ENCODE measurements at regions of chr6 and their contacts with region 1.

Region 1: DNA sequence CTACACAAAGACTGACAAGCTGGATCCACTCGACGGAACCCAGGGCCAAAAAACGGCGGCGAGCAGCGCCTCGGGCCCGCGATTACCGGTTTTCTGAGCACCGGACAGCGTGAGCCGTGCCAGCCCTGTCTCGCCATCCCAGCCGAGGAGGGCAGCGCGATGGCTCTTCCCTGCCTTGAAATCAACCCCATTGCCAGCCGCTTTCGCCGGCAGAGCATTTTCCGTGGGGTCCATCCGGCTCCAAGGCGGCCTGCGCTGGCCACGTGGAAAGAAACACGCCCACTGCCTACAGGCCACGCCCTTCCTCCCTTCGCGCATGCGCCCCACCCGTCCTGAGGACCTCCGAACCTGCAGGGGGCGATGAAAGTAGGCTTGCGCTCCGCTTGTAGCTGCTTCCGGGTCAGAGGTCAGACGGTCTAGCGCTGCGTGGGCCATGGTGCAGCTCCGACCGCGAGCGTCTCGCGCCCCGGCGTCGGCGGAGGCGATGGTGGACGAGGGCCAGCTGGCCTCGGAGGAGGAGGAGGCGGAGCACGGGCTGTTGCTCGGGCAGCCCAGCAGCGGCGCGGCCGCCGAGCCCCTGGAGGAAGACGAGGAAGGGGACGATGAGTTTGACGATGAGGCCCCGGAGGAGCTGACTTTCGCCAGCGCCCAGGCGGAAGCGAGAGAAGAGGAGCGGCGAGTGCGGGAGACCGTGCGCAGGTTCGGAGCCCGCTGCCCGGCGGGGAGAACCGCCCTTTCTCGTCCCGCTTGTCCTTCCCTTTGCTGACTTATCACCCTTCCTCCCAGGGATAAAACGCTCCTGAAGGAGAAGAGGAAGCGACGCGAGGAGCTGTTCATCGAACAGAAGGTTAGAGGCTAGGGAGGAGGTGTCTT is at the start of gene NOL7:
- DNase-seq: peak; percentile 98
- H3K4me3 Mint-ChIP-seq: peak within 1 kb of the TSS; percentile 99
- H3K27ac Mint-ChIP-seq: peak within 1 kb of the TSS; percentile 93
- H3K4me1 Mint-ChIP-seq: peaks cover 66% of the 10 kb centered on the region
- H3K27me3 Mint-ChIP-seq: no peaks in the 10 kb centered on the region
- total RNA-seq, gene NOL7: 54.0 to 57.8 TPM

Region 2: DNA sequence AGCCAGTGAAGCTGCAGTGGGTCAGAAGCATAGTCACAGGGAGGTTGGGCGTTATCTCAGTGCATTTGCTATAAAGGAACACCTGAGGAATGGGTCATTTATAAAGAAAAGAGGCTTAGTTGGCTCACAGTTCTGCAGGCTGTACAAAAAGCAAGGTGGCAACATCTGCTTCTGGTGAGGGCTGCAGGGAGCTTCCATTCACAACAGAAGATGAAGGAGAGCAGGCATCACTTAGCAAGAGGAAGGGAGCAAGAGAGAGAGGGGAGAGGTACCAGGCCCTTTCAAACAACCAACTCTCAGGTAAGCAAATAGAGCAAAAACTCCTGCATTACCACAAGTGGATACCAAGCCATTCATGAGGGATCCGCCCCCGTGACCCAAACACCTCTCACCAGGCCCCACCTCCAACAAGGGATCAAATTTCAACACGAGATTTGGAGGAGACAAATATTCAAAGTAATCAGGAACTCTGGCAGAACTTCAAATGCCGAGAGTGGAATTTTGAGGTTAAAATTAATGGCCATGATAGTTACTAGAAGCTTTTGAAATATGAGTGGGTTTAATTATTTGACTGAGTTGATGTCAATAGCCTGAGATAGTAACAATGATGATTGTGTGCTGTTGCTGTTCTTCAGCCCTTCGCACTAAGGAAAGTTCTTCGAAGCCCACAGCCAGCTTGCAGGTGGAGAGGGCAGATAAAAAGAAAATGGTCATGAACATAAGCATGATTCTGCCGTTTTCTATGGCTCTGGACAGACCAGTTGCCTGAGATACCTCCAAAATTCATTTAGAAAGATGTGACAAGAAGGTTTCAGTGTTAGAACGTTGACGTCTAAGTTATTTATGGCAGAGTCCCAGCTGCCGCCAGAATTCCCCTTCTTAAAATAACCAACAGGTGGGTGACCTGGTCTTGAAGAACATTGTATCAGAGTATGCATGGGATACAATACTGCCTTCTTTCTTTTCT is 1781.3 kb before region 1 on chr6:
- CTCF ChIA-PET with region 1: no interaction called
- POLR2A ChIA-PET with region 1: no interaction called
- DNase-seq: no peak
- H3K4me3 Mint-ChIP-seq: no peak overlapping the region
- H3K27ac Mint-ChIP-seq: no peak overlapping the region
- H3K4me1 Mint-ChIP-seq: no peaks in the 10 kb centered on the region
- H3K27me3 Mint-ChIP-seq: no peaks in the 10 kb centered on the region

Region 3: GRCh38 chr6:13328076-13328874 is 286.9 kb before region 1 on chr6 and contains the start of gene TBC1D7:
- CTCF ChIA-PET with region 1: interaction called, 12 read pairs
- POLR2A ChIA-PET with region 1: interaction called, 28 read pairs
- DNase-seq: peak; percentile 94
- H3K4me3 Mint-ChIP-seq: peak within 1 kb of the TSS; percentile 93
- H3K27ac Mint-ChIP-seq: peak within 1 kb of the TSS; percentile 89
- H3K4me1 Mint-ChIP-seq: peaks cover 29% of the 10 kb centered on the region
- H3K27me3 Mint-ChIP-seq: no peaks in the 10 kb centered on the region
- total RNA-seq, gene TBC1D7: 18.7 to 19.1 TPM

Region 4: GRCh38 chr6:13604546-13605416 is 10.4 kb before region 1 on chr6:
- CTCF ChIA-PET with region 1: interaction called, 6 read pairs
- POLR2A ChIA-PET with region 1: interaction called, 19 read pairs
- DNase-seq: no peak
- H3K4me3 Mint-ChIP-seq: no peak overlapping the region
- H3K27ac Mint-ChIP-seq: no peak overlapping the region
- H3K4me1 Mint-ChIP-seq: peaks cover 2% of the 10 kb centered on the region
- H3K27me3 Mint-ChIP-seq: no peaks in the 10 kb centered on the region

Region 5: DNA sequence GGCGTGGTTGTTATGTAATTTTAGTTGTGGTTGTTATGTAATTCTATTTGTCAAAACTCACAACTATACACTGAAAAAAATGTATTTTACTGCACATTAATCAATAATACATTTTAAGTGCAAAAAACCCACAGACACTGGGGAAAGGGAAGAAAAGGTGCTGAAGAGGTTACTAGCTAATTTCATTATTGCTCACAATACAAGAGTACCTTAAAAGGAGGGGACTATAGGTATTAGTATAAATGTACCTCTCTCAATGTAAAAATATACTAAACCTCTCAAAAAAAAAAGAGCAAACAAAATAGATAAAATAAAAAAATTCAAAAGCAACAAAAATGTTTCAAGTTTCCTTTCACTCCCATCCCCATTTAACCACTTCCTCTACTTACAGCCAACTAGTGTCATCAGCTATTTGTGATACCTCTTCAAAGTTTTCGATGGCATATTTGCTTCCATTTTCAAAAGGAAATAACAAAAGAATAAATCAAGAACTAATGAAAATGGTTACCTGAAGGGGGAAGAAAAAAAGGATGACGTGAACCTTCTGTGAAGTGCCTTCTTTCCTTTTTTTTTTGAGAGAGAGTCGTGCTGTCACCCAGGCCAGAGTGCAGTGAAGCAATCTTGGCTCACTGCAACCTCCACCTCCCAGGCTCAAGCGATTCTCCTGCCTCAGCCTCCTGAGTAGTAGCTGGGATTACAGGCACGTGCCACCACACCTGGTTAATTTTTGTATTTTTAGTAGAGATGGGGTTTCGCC is 66.3 kb after region 1 on chr6:
- CTCF ChIA-PET with region 1: interaction called, 7 read pairs
- POLR2A ChIA-PET with region 1: interaction called, 13 read pairs
- DNase-seq: no peak
- H3K4me3 Mint-ChIP-seq: peak overlapping the region; percentile 51
- H3K27ac Mint-ChIP-seq: peak overlapping the region; percentile 85
- H3K4me1 Mint-ChIP-seq: peaks cover 45% of the 10 kb centered on the region
- H3K27me3 Mint-ChIP-seq: no peaks in the 10 kb centered on the region

Region 6: DNA sequence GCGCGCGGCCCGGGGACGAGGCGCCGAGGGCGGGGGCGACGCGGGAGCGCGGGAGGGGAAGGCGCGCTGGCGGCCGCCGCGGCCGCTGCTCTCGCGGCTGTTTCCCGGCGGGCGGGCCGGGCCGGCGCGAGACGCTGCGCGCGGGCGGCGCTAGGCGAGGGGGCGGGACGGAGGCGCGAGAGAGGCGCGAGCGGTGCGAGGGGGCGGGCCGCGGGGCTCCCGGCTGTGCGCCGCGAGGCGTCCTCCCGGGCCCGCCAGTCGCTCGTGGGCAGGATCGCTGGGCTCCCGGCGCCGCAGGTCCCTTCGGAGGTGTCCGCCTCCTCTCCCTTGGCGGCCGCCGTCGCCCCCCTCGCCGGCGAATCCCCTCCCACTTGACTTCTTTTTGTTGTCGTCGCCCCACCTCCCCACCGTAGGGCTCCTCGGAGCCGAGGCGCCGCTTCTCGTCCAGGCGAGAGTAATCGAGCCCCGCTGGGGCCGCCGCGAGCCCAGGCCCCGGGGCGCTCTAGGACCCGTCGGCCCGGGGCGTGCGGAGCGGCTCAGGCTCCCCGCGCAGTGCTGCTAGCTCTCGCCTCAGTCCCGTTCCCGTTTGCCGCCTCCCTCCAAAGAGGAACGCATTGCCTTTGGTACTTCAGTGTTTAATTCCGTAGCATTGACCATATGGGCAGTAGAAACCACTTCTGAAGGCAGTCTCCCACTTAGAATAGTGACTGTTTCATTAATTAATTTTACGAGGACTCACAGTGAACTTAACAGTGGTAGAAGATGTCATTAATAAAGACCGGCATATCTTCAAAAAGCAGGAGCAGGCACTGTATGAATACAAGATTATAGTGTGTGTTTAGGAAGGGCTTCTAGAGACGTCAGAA is 96.8 kb after region 1 on chr6 and contains the start of gene RANBP9:
- CTCF ChIA-PET with region 1: interaction called, 49 read pairs
- POLR2A ChIA-PET with region 1: interaction called, 105 read pairs
- DNase-seq: peak; percentile 88
- H3K4me3 Mint-ChIP-seq: peak within 1 kb of the TSS; percentile 87
- H3K27ac Mint-ChIP-seq: peak within 1 kb of the TSS; percentile 89
- H3K4me1 Mint-ChIP-seq: peaks cover 51% of the 10 kb centered on the region
- H3K27me3 Mint-ChIP-seq: no peaks in the 10 kb centered on the region
- total RNA-seq, gene RANBP9: 66.8 to 69.1 TPM

Region 7: DNA sequence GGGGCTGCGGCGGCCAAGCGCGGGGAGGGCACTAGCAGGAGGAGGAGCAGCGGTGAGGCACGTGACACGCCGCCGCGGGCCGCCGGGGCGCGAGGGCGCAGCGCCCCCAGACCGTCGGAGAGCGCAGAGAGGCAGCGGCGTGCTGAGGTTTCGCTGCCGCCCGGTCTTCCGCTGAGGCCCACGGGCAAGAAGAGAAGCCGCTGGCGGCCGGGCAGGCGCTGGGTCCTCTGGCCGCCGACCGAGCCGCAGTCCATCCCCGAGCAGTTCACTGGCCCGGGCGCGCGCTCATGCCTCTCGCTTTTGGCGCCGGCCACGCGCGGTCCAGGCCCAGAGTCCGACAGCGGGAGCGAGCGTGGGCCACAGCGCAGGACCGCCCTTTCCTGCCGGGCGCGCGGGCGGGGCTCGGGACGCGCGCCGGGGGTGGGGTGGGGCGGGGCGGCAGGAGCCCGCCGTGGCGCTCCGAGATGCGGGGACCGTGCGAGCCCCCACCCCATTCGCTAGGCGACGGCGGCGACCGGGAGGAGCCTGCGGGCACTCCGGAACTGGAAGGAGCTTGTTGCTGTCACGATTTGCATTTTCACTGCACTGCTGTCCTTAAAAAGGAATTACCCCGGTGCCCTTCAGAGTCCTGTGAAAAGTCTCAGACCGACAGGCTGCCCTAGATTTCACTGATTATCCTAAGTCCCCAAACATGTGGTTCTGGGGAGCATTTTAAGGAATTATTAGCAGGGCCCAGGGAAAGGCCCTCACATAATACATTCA is 199.2 kb after region 1 on chr6 and contains the start of gene MCUR1:
- CTCF ChIA-PET with region 1: interaction called, 7 read pairs
- POLR2A ChIA-PET with region 1: interaction called, 17 read pairs
- DNase-seq: peak; percentile 85
- H3K4me3 Mint-ChIP-seq: peak within 1 kb of the TSS; percentile 85
- H3K27ac Mint-ChIP-seq: peak within 1 kb of the TSS; percentile 78
- H3K4me1 Mint-ChIP-seq: peaks cover 36% of the 10 kb centered on the region
- H3K27me3 Mint-ChIP-seq: peaks cover 6% of the 10 kb centered on the region
- total RNA-seq, gene MCUR1: 23.1 to 23.4 TPM

Measured in activated CD4-positive, alpha-beta memory T cell treated with anti-CD3 and anti-CD28 coated beads, Interleukin-2, amount 10 ng/mL, durations not matched to agents 7 days and 5 days (primary cell).